Breast epithelium (tissue), 4 donors: ENCODE measurements at regions of chr2 and their contacts with region 1.

Region 1: GRCh38 chr2:39730685-39731302 is 48.3 kb downstream of the THUMPD2 start:
- DNase-seq: no peak
- H3K4me3 ChIP-seq: no peak overlapping the region
- H3K27ac ChIP-seq: no peak overlapping the region
- H3K4me1 ChIP-seq: no peaks in the 10 kb centered on the region
- H3K27me3 ChIP-seq: no peaks in the 10 kb centered on the region
- CTCF ChIP-seq: peak in 2 of 3 donors; percentile 30 to 31
- POLR2A ChIP-seq: no peak

Region 2: DNA sequence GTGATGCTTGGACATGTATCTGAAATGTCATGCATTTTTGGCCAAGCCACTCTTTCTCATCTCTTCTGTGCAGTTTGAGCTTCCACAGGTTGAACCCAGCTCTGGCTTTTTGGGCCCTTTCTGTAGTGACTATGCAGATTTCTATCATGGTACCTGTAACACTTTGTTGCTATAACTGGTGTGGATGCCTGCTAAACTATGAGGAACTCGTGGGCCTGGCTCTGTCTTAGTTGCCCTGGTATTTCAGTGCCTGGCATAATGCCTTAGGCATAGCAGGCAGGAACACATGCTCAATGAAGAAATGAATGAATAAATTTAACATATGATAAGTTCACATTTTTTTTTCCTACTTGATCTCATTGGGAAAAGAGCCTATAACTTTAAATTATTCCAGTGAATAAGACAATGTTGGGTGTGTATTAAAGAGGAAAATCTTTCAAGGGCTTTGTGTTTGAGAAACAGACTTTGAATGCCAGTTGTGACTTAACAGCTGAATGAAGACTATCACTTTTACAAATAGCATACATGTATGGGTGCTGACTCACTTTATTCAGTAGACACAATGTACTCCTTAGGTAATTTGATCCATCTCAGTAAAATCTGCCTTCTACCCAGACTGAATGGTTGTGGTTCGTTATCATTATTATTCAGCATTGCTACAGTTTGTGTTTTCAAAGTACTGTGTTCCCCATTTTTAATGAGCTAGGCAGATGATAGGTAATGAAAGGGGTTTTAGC is 207.3 kb before region 1 on chr2:
- intact Hi-C with region 1: loop called (anchors 10 kb)
- DNase-seq: no peak
- H3K4me3 ChIP-seq: no peak overlapping the region
- H3K27ac ChIP-seq: no peak overlapping the region
- H3K4me1 ChIP-seq: no peaks in the 10 kb centered on the region
- H3K27me3 ChIP-seq: no peaks in the 10 kb centered on the region
- CTCF ChIP-seq: no peak
- POLR2A ChIP-seq: no peak